ENCODE measurements at regions of chr4 and their contacts with region 1.

Region 1: GRCh38 chr4:22688236-22688635 is 4.5 kb upstream of the GBA3 start:
- DNase-seq: no peak
- ATAC-seq: no peak
- H3K4me3 ChIP-seq: no peak overlapping the region
- H3K27ac ChIP-seq: no peak overlapping the region
- H3K4me1 ChIP-seq: no peaks in the 10 kb centered on the region
- H3K27me3 ChIP-seq: peaks cover 0 to 2% (median 0%) of the 10 kb centered on the region in 3 donors
- CTCF ChIP-seq: no peak

Region 2: DNA sequence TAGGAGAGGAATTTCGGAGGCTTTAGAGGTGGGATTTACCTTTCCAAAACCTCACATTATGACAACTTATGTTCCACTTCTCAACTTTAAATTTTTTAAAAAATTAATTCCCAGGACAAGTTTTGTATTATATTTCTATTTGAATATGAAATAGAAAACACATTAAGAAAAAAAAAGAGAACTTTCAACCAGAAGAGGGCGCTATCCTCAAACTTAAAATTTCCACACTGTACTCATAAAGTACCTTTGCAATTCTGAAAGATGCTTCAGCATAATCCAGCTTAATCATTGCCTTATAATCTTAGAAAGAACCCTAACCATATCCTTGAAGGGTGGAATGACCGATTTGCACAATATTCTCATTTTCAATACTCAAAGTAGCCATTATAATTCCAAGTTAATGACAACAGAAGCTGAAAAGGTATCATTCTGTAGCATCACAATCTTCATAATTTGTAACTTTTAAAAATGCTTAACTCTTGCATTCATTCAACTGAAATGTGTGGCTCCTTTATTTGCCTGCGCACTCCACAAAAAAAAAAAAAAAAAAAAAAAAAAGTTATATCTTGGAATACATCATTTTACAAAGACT is 897.7 kb before region 1 on chr4:
- intact Hi-C with region 1: loop called (anchors 5 kb)
- DNase-seq: no peak
- ATAC-seq: no peak
- H3K4me3 ChIP-seq: no peak overlapping the region
- H3K27ac ChIP-seq: no peak overlapping the region
- H3K4me1 ChIP-seq: no peaks in the 10 kb centered on the region
- H3K27me3 ChIP-seq: no peaks in the 10 kb centered on the region
- CTCF ChIP-seq: peak; percentile 36

Region 3: DNA sequence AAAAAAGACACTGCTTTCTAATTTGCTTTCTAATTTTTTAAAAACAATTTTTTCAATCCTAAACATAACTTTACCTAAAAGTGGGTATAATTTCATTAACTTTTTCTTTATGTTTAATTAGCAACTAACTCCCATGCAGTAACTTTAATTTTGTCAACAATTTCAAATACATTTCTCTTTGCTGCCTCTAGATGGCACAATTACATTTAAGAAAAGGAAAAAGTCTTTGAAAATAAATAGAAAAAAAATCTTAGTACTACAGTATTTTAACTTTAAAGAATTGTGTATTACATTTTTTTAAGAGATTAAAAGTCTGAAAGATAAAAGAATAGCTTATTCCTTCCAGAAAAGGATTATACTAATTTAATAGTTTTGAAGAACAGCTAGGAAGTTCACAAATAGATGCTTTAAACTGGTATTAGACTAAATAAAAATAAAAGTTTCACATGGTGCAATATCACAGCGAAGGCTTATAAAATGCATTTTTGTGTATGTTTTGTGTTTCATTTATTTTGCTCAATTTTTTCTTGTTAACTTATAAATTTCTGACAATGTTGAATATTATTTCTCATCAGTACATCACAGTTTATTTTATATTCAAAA is 277.5 kb before region 1 on chr4:
- intact Hi-C with region 1: loop called (anchors 2 kb)
- DNase-seq: no peak
- ATAC-seq: peak in 1 of 4 donors; percentile 61
- H3K4me3 ChIP-seq: no peak overlapping the region
- H3K27ac ChIP-seq: no peak overlapping the region
- H3K4me1 ChIP-seq: no peaks in the 10 kb centered on the region
- H3K27me3 ChIP-seq: no peaks in the 10 kb centered on the region
- CTCF ChIP-seq: peak; percentile 63

Region 4: DNA sequence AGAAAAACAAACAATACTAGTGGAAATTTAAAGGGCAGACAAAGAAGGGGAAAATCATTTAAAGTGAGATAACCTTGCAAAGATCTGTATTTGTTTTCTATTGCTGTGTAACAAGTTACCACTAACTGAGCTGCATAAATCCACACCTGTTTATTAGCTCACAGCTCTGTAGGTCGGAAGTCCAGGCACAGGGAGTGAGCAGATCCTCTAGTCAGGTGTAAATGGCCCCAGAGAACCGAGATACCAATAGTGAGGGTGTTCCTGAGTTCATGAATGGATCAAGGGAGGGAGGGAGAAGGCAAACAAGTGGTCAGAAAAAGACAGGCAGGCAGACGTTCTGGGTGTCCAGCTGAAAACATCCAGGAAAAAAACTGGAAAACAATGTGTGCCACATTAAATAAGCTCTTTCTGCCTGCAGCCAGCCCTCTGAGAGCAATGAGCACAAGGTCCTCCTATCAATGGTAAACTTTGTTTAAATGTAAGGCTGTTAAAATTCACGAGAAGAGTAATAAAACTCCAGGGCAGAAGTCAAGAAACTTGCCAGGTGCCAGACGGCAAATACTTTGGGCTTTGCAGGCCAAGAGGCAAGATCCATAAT is 197.4 kb before region 1 on chr4:
- intact Hi-C with region 1: no loop called
- DNase-seq: no peak
- ATAC-seq: no peak
- H3K4me3 ChIP-seq: no peak overlapping the region
- H3K27ac ChIP-seq: peak overlapping the region; percentile 17
- H3K4me1 ChIP-seq: peaks cover 57% of the 10 kb centered on the region
- H3K27me3 ChIP-seq: no peaks in the 10 kb centered on the region
- CTCF ChIP-seq: no peak

Region 5: GRCh38 chr4:22531311-22532019 is 156.8 kb before region 1 on chr4:
- intact Hi-C with region 1: loop called in 1 of 2 experiments (anchors 10 kb)
- DNase-seq: no peak
- ATAC-seq: no peak
- H3K4me3 ChIP-seq: no peak overlapping the region
- H3K27ac ChIP-seq: no peak overlapping the region
- H3K4me1 ChIP-seq: no peaks in the 10 kb centered on the region
- H3K27me3 ChIP-seq: no peaks in the 10 kb centered on the region
- CTCF ChIP-seq: no peak

Region 6: DNA sequence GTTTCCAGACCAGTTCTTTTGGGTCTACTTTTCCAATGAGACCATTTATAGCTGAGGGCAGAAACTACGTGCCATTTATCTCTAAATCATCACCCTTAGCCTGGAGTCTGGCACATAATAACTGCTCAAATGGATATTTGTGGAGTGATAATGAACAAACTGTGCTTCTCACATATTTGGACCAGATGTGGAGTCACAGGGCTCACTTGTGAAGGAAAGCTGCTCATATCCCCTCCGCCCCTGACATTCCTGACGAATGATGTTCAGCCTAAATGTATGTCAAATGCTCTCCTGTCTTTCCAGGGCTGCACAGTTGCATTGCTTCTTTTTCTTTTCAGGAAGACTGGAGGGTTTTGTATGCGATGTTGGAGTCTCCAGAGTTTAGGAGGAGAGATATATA is 114.6 kb after region 1 on chr4:
- intact Hi-C with region 1: no loop called
- DNase-seq: no peak
- ATAC-seq: no peak
- H3K4me3 ChIP-seq: no peak overlapping the region
- H3K27ac ChIP-seq: no peak overlapping the region
- H3K4me1 ChIP-seq: no peaks in the 10 kb centered on the region
- H3K27me3 ChIP-seq: no peaks in the 10 kb centered on the region
- CTCF ChIP-seq: no peak

Region 7: DNA sequence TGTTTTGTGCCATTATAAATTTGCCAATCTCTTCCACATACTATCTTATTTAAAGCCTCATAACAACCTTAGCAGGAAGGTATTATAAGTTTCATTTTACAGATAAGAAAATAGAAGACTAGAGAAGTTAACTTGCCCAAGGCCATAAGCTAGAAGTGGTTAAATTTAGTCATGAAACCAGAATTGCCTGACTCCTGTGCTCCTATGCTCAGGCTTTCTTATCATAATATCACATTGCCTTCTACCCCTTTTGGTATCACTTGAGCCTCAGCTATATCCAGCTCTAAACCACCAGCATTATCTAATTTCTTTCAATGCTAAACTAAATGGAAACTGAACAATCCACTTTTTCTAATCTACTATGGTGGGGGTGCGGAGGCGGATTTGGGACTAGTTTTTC is 169.2 kb after region 1 on chr4:
- intact Hi-C with region 1: no loop called
- DNase-seq: no peak
- ATAC-seq: no peak
- H3K4me3 ChIP-seq: no peak overlapping the region
- H3K27ac ChIP-seq: no peak overlapping the region
- H3K4me1 ChIP-seq: no peaks in the 10 kb centered on the region
- H3K27me3 ChIP-seq: peaks cover 0 to 2% (median 0%) of the 10 kb centered on the region in 3 donors
- CTCF ChIP-seq: no peak

Measured in psoas muscle (tissue), 8 donors.